ENCODE measurements at regions of chrX and their contacts with region 1.

Region 1: DNA sequence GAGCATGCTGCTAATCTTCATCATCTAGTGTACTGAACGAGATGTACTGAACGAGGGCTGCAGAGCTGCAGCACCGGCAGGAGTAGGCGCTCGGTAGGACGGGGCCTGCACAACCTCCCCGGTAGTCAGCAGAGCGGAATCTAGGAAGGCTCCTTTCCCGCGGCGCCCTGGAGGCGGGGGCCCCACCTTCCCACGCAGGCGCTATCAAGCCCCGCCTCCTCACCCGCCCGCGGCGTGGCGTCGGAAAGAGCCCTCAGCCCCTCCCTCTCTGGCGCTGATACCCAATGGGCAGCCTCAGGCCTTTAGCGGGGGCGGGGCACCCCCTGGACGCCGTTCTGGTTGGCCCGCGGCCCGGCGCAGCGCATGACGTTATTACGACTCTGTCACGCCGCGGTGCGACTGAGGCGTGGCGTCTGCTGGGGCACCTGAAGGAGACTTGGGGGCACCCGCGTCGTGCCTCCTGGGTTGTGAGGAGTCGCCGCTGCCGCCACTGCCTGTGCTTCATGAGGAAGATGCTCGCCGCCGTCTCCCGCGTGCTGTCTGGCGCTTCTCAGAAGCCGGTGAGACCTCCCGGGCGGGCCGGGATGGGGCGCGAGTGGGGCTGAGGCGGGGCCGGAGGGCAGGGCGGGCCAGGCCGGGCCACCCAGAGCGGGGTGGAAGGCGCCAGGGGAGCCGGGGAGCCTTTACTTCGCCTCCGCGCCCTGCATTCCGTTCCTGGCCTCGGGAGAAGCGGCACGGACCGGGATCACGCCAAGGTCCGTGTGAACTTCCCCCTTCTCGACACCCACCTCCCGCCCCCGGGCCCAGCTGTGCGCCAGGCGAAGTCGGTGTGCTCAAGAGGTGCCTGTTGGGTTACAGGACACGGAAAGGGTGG is at the start of gene PDHA1:
- DNase-seq: peak; percentile 84 to 86
- H3K4me3 ChIP-seq: peak within 1 kb of the TSS; percentile 67 to 82 (median 67)
- H3K27ac ChIP-seq: peak within 1 kb of the TSS; percentile 91 to 97
- H3K4me1 ChIP-seq: no peaks in the 10 kb centered on the region
- H3K27me3 ChIP-seq: peaks cover 0 to 4% of the 10 kb centered on the region in 2 donors
- CTCF ChIP-seq: no peak
- POLR2A ChIP-seq: peak; percentile 22
- total RNA-seq, gene PDHA1: 54.7 to 58.4 (median 55.7) TPM

Region 2: GRCh38 chrX:17547658-17548057 is 1796.1 kb before region 1 on chrX:
- intact Hi-C with region 1: loop called (anchors 5 kb)
- DNase-seq: no peak
- H3K4me3 ChIP-seq: no peak overlapping the region
- H3K27ac ChIP-seq: no peak overlapping the region
- H3K4me1 ChIP-seq: no peaks in the 10 kb centered on the region
- H3K27me3 ChIP-seq: peaks cover 0 to 46% of the 10 kb centered on the region in 2 donors
- CTCF ChIP-seq: no peak
- POLR2A ChIP-seq: no peak

Region 3: DNA sequence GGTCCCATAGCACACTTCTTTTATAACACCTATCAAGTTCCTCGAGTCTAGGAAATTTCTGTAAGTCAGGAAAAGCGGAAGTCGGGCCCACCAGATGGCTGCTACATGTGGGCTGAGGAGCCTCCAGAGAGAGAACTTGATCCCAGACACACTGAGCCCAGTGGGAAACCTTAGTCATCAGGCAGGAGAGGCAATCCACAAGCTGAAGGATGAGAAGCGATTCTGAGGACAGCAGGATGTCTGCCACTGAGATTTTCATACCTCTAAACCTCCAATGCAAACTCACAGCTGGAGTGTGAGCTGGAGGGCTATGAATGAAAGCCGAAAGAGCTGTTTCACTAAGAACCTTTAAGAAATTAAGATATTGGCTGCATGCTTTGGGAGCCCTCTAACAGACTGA is 52.7 kb before region 1 on chrX:
- intact Hi-C with region 1: no loop called
- DNase-seq: no peak
- H3K4me3 ChIP-seq: no peak overlapping the region
- H3K27ac ChIP-seq: no peak overlapping the region
- H3K4me1 ChIP-seq: no peaks in the 10 kb centered on the region
- H3K27me3 ChIP-seq: peaks cover 0 to 32% of the 10 kb centered on the region in 2 donors
- CTCF ChIP-seq: no peak
- POLR2A ChIP-seq: no peak

Region 4: DNA sequence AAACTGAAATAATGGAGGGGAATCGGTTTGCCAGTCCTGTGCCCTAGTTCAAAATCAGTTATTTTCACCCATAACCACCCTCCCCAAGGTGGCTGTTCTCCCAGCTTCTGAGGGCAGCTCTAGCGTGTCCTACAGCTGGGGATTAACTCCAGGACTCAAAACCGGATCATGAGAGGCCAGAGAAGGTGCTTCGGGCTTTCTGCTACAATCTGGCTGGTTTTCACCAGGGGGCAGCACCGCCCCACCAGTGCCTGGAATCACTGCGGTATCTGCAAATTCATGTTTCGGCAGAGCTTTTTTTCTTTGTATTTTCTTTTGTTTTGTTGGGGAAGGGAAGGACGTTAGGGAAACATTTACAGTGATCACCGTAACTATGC is 28.4 kb after region 1 on chrX:
- intact Hi-C with region 1: loop called (anchors 1 kb)
- DNase-seq: no peak
- H3K4me3 ChIP-seq: peak overlapping the region; percentile 29 to 65 (median 45)
- H3K27ac ChIP-seq: peak overlapping the region in 1 of 2 donors; percentile 20
- H3K4me1 ChIP-seq: no peaks in the 10 kb centered on the region
- H3K27me3 ChIP-seq: peaks cover 0 to 21% of the 10 kb centered on the region in 2 donors
- CTCF ChIP-seq: peak in 2 of 3 donors; percentile 47 to 61
- POLR2A ChIP-seq: no peak

Region 5: DNA sequence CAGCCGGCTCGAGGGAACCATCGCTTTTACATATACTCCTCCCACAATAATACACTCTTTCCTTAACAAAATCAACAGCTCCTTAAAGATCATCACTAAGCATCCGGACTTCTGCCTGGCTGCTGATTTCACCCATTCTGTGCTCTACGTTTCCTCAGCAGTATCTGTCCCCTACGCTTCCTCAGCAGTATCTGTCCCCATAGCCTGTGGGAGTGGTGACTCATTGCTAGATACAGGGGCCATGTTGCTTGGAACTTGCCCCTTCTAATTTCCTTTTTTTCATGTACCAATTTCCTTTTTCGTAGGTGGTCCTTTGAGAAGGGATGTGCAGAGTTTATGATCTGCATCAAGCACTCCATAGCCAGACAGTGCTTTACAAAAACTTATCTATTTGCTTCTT is 152.9 kb after region 1 on chrX:
- intact Hi-C with region 1: no loop called
- DNase-seq: no peak
- H3K4me3 ChIP-seq: no peak overlapping the region
- H3K27ac ChIP-seq: no peak overlapping the region
- H3K4me1 ChIP-seq: no peaks in the 10 kb centered on the region
- H3K27me3 ChIP-seq: peaks cover 0 to 28% of the 10 kb centered on the region in 2 donors
- CTCF ChIP-seq: no peak
- POLR2A ChIP-seq: no peak